ENCODE measurements at regions of chrX and their contacts with region 1.

Region 1: DNA sequence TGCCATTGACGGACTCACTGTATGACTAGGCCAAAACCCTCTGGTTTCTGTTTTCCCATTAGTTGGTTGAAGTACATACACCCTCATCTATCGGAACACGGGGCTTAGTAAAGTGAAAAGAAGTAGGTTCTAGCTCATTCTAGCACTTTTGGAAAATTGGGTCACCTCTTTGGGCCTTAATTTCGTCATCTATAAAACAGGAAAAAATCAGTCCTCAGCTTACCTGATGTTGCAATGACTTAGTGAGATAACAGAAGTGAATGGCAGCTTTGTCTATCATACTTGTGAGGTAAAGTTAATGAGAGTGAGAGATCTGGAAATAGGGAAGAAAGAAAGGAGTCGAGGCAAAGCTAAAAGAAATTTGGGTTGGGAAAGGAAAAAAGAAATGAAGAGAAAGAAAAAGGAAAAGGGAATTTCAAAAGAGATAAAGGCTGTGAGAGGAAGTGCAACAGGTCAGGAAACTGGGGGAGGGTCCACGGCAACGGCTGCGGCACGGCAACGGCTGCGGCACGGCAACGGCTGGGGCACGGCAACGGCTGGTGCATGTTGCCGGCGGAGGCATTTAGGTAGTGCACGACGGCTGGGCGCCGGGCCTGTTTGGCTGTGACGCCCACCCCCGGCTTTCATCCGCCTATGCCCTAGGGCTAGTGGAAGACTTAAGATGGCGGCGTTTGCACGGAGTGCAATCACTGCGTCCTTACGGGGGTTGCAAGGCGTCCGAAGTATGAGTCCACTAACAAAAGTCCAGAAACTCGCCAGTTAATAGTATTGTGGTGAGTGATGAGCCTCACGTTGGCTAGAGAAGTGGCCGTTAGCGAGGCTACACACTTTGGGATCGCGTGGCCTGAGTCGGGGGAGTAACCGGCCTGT is 360.1 kb upstream of the ZCCHC13 start:
- H3K4me3 Mint-ChIP-seq: peak overlapping the region; percentile 82
- H3K27ac Mint-ChIP-seq: peak overlapping the region; percentile 84
- H3K4me1 Mint-ChIP-seq: peaks cover 5% of the 10 kb centered on the region
- H3K27me3 Mint-ChIP-seq: no peaks in the 10 kb centered on the region

Region 2: GRCh38 chrX:74614093-74614909 is 670.4 kb after region 1 on chrX and contains the start of gene RLIM:
- intact Hi-C with region 1: loop called (anchors 10 kb)
- H3K4me3 Mint-ChIP-seq: peak within 1 kb of the TSS; percentile 100
- H3K27ac Mint-ChIP-seq: peak within 1 kb of the TSS; percentile 100
- H3K4me1 Mint-ChIP-seq: no peaks in the 10 kb centered on the region
- H3K27me3 Mint-ChIP-seq: no peaks in the 10 kb centered on the region